ENCODE measurements at regions of chr17 and their contacts with region 1.

Region 1: GRCh38 chr17:50397111-50397918 is at the start of gene LRRC59:
- DNase-seq: peak; percentile 96 to 100
- H3K4me3 ChIP-seq: peak within 1 kb of the TSS; percentile 72
- H3K4me3 Mint-ChIP-seq: peak within 1 kb of the TSS; percentile 76
- H3K27ac Mint-ChIP-seq: peak within 1 kb of the TSS; percentile 71
- H3K4me1 ChIP-seq: peaks cover 5% of the 10 kb centered on the region; the same call in 1 of the 2 replicates
- H3K4me1 Mint-ChIP-seq: peaks cover 12% of the 10 kb centered on the region
- H3K27me3 ChIP-seq: no peaks in the 10 kb centered on the region
- H3K27me3 Mint-ChIP-seq: no peaks in the 10 kb centered on the region
- CTCF ChIP-seq: peak; percentile 100
- total RNA-seq, gene LRRC59: 324 and 336 TPM in 2 replicates

Region 2: GRCh38 chr17:50289991-50290702 is 107.2 kb before region 1 on chr17:
- CTCF ChIA-PET with region 1: no interaction called
- POLR2A ChIA-PET with region 1: no interaction called
- intact Hi-C with region 1: no loop called
- DNase-seq: peak in 1 of 2 experiments; percentile 43
- H3K4me3 ChIP-seq: no peak overlapping the region
- H3K4me3 Mint-ChIP-seq: no peak overlapping the region
- H3K27ac Mint-ChIP-seq: no peak overlapping the region
- H3K4me1 ChIP-seq: peaks cover 11% of the 10 kb centered on the region
- H3K4me1 Mint-ChIP-seq: peaks cover 8% of the 10 kb centered on the region
- H3K27me3 ChIP-seq: no peaks in the 10 kb centered on the region
- H3K27me3 Mint-ChIP-seq: no peaks in the 10 kb centered on the region
- CTCF ChIP-seq: no peak

Region 3: DNA sequence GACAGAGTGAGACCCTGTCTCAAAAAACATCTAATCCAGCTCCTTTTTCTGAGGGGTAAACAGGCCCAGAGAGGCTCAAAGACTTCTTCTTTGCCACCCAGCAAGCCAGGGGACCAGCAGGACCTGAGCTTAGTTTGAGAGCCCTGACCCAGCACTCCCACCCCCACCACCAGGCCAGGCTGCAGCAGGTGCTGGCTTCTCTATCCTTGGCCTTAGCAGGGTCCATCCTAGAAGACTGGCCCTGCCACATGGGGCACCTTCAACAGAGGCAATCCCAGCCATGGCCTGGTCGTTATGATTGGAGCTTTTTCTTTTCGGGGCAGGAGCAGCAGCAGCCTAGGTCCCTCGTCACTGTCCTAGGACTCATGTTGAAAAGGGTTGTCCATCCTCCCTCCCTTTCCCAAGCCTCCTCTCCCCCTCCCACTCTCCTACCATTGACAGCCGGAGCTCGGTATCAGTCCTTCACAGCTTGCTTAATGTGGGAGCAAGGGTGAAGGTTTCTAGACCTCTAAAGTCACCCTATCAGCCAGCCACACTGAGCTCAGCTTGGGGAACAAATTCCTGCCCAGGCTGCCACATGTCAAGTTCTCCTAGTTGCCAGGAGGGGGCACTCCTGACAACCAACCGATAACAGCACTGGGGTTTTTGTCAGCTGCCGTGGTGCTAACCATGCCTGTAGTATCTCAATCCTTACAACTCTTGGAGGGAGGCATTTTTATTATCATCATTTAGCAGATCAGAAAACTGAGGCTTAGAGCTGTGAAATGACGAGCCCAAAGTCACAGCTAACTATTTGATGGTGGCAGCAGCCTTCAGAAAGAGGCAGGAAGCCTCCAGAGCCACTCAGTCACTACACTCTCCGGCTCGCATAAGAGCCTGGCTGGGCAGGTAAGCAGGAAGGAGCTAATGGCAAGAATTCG is 35.5 kb before region 1 on chr17:
- CTCF ChIA-PET with region 1: interaction called, 54 read pairs
- POLR2A ChIA-PET with region 1: interaction called, 14 read pairs
- intact Hi-C with region 1: no loop called
- DNase-seq: peak; percentile 80 to 81
- H3K4me3 ChIP-seq: no peak overlapping the region
- H3K4me3 Mint-ChIP-seq: no peak overlapping the region
- H3K27ac Mint-ChIP-seq: peak overlapping the region; percentile 23
- H3K4me1 ChIP-seq: no peaks in the 10 kb centered on the region; the same call in 1 of the 2 replicates
- H3K4me1 Mint-ChIP-seq: peaks cover 10% of the 10 kb centered on the region
- H3K27me3 ChIP-seq: no peaks in the 10 kb centered on the region
- H3K27me3 Mint-ChIP-seq: no peaks in the 10 kb centered on the region
- CTCF ChIP-seq: peak; percentile 97 to 98

Region 4: DNA sequence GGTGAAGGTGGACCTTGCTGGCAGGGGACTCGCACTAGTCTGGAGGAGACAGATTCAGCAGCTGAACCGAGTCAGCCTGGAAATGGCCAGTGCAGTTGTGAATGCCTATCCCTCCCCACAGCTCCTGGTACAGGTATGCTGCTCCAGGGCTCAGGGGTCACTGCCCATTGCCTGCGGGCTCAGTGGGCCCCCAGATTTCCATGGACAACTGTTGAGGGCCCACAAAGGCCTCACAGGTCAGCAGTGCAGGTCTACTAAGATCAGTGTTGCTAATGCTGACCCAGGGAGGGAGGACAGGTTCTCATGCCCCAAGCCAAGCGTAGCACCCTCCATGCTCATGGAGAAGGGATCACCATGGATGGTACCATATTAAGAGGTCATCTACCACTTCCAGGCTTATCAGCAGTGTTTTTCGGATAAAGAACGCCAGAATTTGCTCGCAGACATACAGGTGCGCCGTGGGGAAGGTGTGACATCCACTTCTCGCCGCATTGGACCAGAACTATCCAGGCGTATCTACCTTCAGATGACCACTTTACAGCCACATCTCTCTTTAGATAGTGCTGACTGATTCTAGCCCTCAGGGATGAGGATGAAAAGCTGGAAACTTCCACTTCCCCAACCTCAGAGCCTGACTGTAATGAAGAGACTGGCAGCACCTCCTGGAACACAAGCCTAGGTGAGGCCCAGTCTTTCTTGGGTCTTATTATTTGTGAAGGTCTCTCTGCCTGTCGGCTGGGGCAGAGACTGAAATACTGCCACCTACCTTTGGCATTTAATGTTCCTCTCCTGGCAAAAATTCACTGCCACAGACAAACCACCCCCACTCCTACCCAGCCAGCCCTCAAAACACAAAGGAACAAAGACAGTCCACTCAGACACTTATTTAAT is 16.7 kb before region 1 on chr17:
- CTCF ChIA-PET with region 1: interaction called, 17 read pairs
- POLR2A ChIA-PET with region 1: interaction called, 5 read pairs
- intact Hi-C with region 1: no loop called
- DNase-seq: no peak
- H3K4me3 ChIP-seq: no peak overlapping the region
- H3K4me3 Mint-ChIP-seq: no peak overlapping the region
- H3K27ac Mint-ChIP-seq: no peak overlapping the region
- H3K4me1 ChIP-seq: no peaks in the 10 kb centered on the region
- H3K4me1 Mint-ChIP-seq: no peaks in the 10 kb centered on the region
- H3K27me3 ChIP-seq: no peaks in the 10 kb centered on the region
- H3K27me3 Mint-ChIP-seq: no peaks in the 10 kb centered on the region
- CTCF ChIP-seq: peak; percentile 22 to 37

Region 5: DNA sequence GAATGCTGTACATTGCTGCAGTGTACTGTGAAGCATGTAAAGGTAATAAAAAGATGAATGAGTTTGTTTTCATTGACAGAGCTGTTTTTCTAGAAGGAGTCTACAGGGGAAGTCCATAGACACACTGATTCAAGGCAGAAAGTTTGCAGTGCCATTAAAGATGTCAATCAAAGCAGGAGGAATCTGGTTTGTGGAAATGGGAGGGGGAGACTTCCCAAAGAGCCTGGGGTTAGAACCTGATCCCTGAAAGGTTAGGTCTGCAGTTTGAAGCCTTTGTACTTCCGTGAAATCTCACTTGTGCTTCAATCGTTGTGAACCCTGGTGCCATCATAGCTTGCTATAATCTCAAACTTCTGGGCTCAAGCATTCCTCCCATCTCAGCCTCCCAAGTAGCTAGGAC is 33.9 kb after region 1 on chr17:
- CTCF ChIA-PET with region 1: interaction called, 40 read pairs
- POLR2A ChIA-PET with region 1: interaction called, 9 read pairs
- intact Hi-C with region 1: loop called (anchors 1 kb)
- DNase-seq: peak; percentile 66 to 71
- H3K4me3 ChIP-seq: no peak overlapping the region
- H3K4me3 Mint-ChIP-seq: no peak overlapping the region
- H3K27ac Mint-ChIP-seq: peak overlapping the region; percentile 0
- H3K4me1 ChIP-seq: peaks cover 49% of the 10 kb centered on the region
- H3K4me1 Mint-ChIP-seq: peaks cover 32% of the 10 kb centered on the region
- H3K27me3 ChIP-seq: no peaks in the 10 kb centered on the region
- H3K27me3 Mint-ChIP-seq: no peaks in the 10 kb centered on the region
- CTCF ChIP-seq: no peak

Region 6: GRCh38 chr17:50541716-50542688 is 144.7 kb after region 1 on chr17:
- CTCF ChIA-PET with region 1: interaction called, 9 read pairs
- POLR2A ChIA-PET with region 1: interaction called, 10 read pairs
- intact Hi-C with region 1: no loop called
- DNase-seq: peak; percentile 94 to 100
- H3K4me3 ChIP-seq: peak overlapping the region; percentile 45
- H3K4me3 Mint-ChIP-seq: peak overlapping the region; percentile 77
- H3K27ac Mint-ChIP-seq: peak overlapping the region; percentile 39
- H3K4me1 ChIP-seq: peaks cover 66% of the 10 kb centered on the region
- H3K4me1 Mint-ChIP-seq: peaks cover 69% of the 10 kb centered on the region
- H3K27me3 ChIP-seq: no peaks in the 10 kb centered on the region
- H3K27me3 Mint-ChIP-seq: no peaks in the 10 kb centered on the region
- CTCF ChIP-seq: peak; percentile 41 to 57